Activated CD4-positive, alpha-beta memory T cell treated with anti-CD3 and anti-CD28 coated beads for 36 hours (primary cell): ENCODE measurements at regions of chr14 and their contacts with region 1.

Region 1: DNA sequence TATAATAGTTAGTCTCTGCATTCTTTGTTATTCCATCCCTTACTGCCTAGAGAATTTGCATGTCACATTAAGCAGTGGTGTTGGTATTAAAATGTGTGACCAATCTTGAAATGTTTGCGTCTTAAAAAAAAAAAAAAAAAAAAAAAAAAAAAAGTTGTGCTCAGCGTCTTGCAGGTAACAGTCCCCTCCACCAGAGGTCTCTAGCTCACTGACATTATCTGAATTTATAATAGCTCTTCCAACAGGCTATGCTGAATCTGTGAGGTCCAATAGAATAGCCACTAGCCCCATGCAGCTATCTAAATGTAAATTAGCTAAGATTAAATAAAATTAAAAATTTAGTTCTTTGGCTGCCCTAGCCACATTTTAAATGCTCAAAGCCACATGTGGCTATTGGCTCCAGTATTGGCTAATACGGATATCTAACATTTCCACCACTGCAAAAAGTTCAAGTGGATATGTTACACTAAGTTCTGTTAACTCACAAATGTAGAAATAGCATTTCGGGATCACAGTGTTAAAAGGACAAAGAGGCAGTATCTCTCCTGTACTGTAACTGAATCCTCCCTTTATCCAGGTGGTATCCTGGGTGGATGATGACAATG is 28.7 kb downstream of the NKX2-8 start:
- DNase-seq: no peak
- H3K4me3 Mint-ChIP-seq: no peak overlapping the region
- H3K27ac Mint-ChIP-seq: no peak overlapping the region
- H3K4me1 Mint-ChIP-seq: no peaks in the 10 kb centered on the region
- H3K27me3 Mint-ChIP-seq: peaks cover 8% of the 10 kb centered on the region

Region 2: DNA sequence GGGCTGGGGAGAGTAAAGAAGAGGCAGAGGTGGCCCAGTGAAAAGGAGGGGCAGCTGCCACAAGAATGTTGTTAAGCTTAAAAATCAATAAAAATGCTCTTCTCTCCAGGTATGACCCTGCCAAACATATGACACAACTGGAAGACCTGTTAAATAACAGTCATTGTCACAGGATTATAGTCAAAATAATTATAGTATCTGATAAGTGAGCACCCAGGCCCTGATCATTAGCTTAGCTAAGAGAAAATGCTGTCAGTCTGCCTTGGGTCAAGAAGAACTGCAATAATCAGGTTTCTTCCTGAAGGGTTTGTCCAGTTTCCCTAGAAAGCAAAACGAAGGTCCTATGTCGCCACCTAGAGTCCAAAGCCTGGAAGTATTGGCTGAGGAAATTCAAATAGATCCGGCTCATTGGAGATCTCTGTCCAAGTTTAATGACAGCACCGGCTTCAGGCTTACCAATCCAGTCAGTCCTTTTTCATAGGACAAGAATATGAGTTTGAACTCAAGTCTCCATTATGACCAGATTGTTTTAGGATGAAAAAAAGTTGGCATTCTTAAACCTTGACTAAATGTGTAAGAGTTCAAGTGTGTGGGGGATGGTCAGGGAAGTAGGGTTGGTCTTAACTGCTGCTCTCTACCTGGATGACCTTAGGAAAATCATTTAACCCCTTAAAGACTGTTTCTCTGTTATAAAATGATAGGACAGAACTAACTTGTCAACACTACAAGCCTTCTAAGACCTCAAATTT is 51.2 kb after region 1 on chr14:
- CTCF ChIA-PET with region 1: interaction called, 50 read pairs
- POLR2A ChIA-PET with region 1: no interaction called
- intact Hi-C with region 1: loop called (anchors 1 kb)
- DNase-seq: peak; percentile 40
- H3K4me3 Mint-ChIP-seq: no peak overlapping the region
- H3K27ac Mint-ChIP-seq: no peak overlapping the region
- H3K4me1 Mint-ChIP-seq: no peaks in the 10 kb centered on the region
- H3K27me3 Mint-ChIP-seq: peaks cover 10% of the 10 kb centered on the region